Activated CD4-positive, alpha-beta T cell treated with anti-CD3 and anti-CD28 coated beads for 36 hours (primary cell): ENCODE measurements at regions of chr1 and their contacts with region 1.

Region 1: GRCh38 chr1:229625915-229626831 is at the starts of genes TAF5L and URB2:
- DNase-seq: peak; percentile 93
- ATAC-seq: peak; percentile 92
- H3K4me3 Mint-ChIP-seq: peak within 1 kb of the TSS; percentile 89
- H3K27ac Mint-ChIP-seq: peak within 1 kb of the TSS; percentile 96
- H3K4me1 Mint-ChIP-seq: peaks cover 57% of the 10 kb centered on the region
- H3K27me3 Mint-ChIP-seq: no peaks in the 10 kb centered on the region
- total RNA-seq, gene TAF5L: 16.5 to 17.6 TPM
- total RNA-seq, gene URB2: 13.9 to 16.5 TPM

Region 2: GRCh38 chr1:228486596-228487335 is 1139.4 kb before region 1 on chr1:
- CTCF ChIA-PET with region 1: no interaction called
- POLR2A ChIA-PET with region 1: no interaction called
- intact Hi-C with region 1: loop called in 1 of 2 experiments (anchors 10 kb)
- DNase-seq: peak; percentile 87
- ATAC-seq: peak; percentile 66
- H3K4me3 Mint-ChIP-seq: peak overlapping the region; percentile 96
- H3K27ac Mint-ChIP-seq: peak overlapping the region; percentile 99
- H3K4me1 Mint-ChIP-seq: peaks cover 40% of the 10 kb centered on the region
- H3K27me3 Mint-ChIP-seq: no peaks in the 10 kb centered on the region

Region 3: DNA sequence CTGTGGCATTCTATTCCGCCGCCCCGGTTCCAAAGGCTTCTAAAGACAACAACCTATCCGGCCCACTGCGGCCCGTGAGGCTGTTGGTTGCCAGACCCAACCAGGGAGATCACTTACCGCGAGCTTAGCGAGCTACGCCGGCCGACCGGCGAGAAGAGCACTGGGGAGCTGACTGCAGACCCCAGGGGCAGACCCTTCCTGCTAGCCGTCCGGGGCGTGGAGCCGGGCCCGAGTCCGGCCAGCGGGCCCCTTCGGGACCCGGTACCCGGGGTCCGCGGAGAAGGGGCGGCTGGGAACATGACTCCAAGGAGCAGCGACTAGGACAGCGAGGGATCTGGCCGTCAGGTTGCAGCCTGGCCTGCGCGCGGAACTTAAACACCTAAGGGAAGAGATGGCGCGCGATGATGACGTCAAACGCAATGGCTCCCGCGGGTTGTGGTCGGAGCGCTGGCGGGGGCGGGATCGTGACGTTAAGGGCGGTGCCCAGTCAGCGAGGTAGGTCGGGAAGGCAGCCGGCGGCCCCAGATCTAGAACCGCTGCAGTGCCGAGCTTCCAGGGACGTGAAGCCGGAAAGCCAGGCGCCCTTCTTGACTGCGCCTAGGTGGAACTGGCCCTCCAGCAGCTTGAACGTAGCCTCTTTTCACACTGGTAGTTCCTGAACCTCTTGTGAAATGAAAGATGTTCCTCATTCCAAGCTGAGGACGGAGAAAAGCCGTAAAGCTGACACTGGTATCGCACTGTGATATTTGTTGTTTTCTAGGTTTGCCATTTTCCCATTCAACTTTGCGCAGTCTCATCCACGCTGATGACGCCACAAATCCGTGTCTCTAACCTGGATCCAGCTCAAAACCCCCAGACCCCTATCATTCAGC is 118.0 kb before region 1 on chr1 and contains the start of gene NUP133:
- CTCF ChIA-PET with region 1: no interaction called
- POLR2A ChIA-PET with region 1: no interaction called
- intact Hi-C with region 1: loop called (anchors 1 kb)
- DNase-seq: peak; percentile 100
- ATAC-seq: peak; percentile 95
- H3K4me3 Mint-ChIP-seq: peak within 1 kb of the TSS; percentile 95
- H3K27ac Mint-ChIP-seq: peak within 1 kb of the TSS; percentile 92
- H3K4me1 Mint-ChIP-seq: peaks cover 24% of the 10 kb centered on the region
- H3K27me3 Mint-ChIP-seq: no peaks in the 10 kb centered on the region
- total RNA-seq, gene NUP133: 53.5 to 57.5 TPM

Region 4: GRCh38 chr1:229614701-229615100 is 11.5 kb before region 1 on chr1:
- CTCF ChIA-PET with region 1: no interaction called
- POLR2A ChIA-PET with region 1: no interaction called
- intact Hi-C with region 1: no loop called
- DNase-seq: no peak
- ATAC-seq: no peak
- H3K4me3 Mint-ChIP-seq: no peak overlapping the region
- H3K27ac Mint-ChIP-seq: no peak overlapping the region
- H3K4me1 Mint-ChIP-seq: peaks cover 19% of the 10 kb centered on the region
- H3K27me3 Mint-ChIP-seq: no peaks in the 10 kb centered on the region